Sciatic nerve (tissue), 2 donors: ENCODE measurements at regions of chr11 and their contacts with region 1.

Region 1: DNA sequence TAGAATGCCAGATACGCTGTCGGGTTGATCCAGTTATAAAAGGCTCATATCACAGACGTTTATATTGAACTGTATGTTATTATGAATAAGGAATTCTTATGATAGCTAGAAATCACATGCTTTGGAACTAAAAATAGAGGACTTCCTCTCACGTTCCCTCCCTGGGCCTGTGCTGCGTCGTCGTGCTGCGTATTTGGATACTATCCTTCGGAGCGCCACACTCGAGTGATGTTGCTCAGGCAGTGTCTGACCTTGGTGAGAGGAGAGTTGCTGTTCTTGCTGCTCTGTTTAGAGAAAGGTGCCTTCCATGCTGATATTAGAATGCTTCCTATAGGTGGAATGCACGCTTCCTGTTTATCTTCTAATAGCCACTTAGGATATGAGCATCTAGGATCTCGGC is 20.2 kb upstream of the ST14 start:
- DNase-seq: no peak
- ATAC-seq: no peak

Region 2: DNA sequence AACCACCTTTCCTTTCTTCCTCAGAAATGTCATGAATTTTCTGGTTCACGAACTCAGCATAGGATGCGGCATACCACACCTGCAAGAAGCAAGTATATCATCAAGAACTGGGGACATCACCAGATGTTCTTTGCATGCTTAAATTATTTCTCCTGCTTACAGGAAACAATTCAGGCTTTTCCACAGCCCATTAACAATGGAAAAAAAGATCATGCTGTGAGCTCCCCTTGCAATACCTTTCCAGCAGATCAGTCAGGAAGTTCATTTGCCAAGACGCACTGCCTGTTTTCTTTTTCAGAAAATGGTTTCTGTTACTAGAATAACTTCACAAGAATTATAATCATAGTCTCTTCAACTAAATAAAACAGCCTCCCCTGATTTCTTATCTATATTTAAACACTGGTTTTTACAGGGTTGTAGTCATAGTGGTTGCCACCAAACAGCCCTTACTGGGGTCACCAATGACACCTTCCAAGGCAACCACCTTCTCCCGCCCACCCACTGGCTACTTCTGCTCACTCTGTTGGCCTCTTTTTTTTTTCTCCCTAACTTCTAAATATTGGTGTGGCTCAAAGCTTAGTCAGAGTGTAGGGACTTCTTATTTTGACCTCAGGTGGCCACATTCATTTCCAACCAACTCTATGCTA is 201.7 kb before region 1 on chr11:
- intact Hi-C with region 1: loop called (anchors 5 kb)
- DNase-seq: no peak
- ATAC-seq: no peak

Region 3: DNA sequence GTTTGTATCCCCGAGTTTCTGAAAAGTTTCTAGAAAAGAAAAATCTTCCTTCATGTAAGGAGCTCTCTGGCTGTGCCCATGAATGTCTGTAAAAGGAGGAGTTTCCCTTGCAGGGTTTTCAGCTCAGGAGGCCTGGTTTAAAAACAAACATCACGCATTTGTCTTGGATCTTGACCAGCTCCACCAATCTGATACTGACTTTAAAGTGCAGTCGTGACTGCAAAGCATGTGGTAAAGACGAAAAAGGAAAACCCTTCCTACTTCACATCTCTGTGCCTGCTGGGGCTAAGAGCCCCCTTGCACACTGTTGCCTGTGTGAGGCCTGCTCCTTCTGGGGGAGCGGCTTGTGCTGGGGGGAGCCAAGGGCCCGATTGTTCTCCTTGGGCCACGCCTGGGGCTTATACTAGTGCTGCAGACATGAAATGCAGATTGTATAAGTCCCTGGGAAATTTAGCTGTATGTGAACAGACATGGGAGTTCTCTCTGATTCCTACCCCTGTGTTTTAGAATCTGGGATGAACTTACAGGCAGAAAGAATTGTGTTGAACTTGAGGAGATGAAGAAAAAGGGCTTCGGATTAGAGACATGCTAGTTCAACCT is 371.1 kb after region 1 on chr11:
- intact Hi-C with region 1: no loop called
- DNase-seq: no peak
- ATAC-seq: peak; percentile 56